ENCODE measurements at regions of chr7 and their contacts with region 1.

Region 1: DNA sequence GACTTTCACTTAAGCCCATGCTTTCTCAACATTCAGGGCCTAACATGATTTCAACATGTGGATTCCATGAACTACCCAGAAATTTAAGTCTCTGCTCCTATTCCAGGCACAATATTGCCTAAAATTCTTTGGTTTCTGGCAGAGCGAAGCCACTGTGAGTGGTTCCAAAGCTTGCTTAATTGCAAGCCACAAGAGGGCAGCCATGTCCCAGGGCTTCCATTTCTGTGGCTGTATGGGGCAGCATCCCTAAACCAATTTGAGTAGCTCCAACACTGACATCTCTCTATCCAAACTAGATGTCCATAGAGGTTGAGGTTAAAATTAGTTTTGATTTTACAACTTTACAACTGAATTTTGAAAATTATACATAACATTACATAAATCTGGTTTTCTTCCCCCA is 56.3 kb upstream of the MDFIC start:
- DNase-seq: peak; percentile 70
- ATAC-seq: no peak

Region 2: DNA sequence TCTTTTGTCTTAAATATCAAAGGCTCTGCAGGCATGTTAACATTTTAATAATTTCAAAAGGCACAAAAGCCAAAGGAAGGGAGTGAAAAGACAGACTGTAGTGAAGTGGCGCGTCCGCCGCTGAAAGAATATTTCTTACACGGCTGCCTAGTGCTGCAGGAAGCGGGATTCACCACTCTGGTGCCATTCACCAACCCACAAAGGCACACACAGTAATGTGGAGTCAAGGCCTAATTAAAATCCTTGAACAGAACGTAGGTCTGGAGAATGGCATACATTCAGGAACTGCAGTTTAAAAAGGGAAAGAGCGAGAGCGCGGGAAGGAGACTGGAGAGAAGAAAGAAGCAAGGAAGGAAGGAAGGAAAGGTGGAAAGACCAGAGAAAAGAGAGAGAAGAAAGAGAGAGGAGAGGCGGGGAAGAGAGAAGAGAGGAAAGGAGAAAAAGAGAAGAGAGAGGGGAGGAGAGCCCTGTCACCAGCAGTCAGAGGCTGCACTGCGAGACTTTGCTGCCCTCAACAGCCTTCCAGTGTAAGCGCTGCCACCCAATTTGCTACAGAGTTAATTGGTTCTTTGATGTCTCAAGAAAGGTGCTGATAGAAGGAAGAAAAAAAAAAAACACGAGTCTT is 610.3 kb after region 1 on chr7:
- intact Hi-C with region 1: loop called (anchors 5 kb)
- DNase-seq: no peak
- ATAC-seq: peak; percentile 26

Region 3: DNA sequence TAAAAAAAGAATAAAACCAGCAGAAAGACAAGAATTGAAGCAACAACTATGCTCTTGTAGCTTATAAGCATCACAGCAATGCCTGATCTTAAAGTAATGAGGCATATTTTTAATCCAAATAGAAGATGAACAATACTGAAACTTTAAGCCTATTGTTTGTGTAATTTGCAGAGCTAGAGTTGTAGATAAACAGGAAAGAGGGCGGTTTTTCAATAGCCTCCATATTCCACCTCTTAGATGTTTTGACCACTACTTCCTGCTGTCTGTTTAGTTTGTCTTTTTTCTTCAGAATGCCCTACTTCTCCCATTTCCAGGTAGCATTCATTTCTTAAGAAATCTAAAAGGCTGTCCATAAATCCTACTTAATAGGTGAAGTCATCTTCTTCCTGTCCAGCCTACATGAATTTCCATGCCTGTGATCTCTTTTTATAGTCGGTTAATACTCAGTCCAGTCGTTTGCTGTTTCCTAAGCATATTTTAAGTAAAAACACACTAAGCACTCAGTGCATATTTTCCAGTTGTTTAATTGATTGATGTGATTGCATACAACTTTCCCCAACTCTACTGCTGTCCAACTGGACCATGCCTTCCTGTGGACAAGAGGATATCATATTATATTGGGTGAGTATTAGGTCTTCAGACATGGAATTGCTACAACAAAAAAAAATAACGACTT is 856.9 kb after region 1 on chr7:
- intact Hi-C with region 1: no loop called
- DNase-seq: no peak
- ATAC-seq: no peak